Right cardiac atrium (tissue), 5 donors: ENCODE measurements at regions of chr9 and their contacts with region 1.

Region 1: DNA sequence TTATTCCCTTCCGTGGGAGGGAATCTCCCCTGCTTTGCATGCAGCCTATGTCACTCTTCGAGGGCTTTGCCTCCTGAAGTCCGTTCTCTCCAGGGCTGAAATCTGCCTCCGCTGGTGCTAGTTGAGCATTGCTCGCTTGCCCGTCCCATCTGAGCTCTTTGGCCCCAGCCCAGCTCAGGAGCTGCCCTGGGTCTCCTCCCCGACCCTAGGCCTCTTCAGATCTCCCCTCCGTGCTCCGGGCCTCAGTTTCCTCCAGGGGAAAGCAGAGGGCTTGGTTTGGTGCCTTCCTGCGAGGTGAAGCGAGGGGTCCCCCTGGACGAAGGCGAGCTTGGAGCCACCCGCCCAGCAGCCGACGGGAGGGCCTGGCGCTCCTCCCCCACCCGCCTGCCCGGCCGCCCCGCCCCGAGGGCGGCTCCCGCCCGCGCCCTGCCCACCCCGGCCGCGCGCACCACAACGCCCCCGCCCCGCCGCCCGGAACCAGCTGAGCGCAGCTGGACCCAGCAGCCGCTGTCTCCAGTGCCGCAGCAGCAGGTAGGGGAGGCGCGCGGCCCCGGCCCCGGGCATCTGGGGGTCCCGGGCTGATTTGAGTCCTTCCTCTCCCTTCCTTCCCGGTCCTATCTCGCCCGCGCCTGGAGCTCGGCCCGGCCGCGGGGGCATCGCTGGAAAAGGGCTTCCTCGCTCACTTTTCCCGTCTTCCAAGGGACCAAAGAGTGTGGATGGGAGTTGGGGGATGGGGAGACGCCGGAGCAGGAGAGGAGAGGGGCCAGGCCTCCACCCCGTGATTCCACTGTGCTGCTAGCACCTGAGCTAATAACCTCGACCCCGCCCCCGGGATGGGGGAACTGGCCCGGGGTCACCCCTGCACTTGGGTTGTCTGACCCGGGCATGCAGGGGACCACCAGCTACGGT is at the start of gene GSN:
- DNase-seq: peak; percentile 84 to 95 (median 94)
- ATAC-seq: peak; percentile 92
- H3K4me3 ChIP-seq: peak within 1 kb of the TSS; percentile 86
- H3K27ac ChIP-seq: peak within 1 kb of the TSS; percentile 73
- H3K4me1 ChIP-seq: peaks cover 20% of the 10 kb centered on the region
- H3K27me3 ChIP-seq: no peaks in the 10 kb centered on the region
- total RNA-seq, gene GSN: 949 to 1,838 (median 1,489) TPM

Region 2: DNA sequence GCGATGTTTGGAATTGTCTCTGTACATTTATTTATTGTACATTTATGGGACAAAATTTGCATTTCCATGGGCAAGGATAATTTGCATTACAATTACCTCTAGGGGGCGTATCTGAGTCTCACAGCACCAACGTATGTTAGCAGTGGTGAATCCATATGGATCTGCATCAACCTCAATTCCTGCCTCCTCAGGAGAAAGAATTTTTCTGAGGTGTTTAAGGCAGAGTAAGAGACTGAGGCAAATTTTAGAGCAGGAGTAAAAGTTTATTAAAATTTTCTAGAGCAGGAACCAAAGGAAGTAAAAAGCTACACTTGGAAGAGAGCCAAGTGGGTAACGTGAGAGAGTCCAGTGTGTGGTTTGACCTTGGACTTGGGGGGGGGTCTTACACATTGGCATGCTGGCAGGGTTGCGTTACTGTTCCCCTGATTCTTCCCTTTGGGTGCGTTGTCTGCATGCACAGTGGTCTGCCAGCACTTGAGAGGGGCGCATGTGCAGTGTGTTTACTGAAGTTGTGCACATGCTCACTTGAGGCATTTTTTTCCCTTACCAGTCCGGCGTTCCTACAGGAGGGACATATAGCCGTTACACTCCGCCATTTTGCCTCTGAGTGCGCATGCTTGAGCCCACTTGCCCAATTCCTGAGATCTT is 45.3 kb before region 1 on chr9:
- intact Hi-C with region 1: loop called in 3 of 4 experiments (anchors 5 to 10 kb)
- DNase-seq: no peak
- ATAC-seq: peak in 1 of 2 donors; percentile 46
- H3K4me3 ChIP-seq: no peak overlapping the region
- H3K27ac ChIP-seq: no peak overlapping the region
- H3K4me1 ChIP-seq: no peaks in the 10 kb centered on the region
- H3K27me3 ChIP-seq: no peaks in the 10 kb centered on the region

Region 3: DNA sequence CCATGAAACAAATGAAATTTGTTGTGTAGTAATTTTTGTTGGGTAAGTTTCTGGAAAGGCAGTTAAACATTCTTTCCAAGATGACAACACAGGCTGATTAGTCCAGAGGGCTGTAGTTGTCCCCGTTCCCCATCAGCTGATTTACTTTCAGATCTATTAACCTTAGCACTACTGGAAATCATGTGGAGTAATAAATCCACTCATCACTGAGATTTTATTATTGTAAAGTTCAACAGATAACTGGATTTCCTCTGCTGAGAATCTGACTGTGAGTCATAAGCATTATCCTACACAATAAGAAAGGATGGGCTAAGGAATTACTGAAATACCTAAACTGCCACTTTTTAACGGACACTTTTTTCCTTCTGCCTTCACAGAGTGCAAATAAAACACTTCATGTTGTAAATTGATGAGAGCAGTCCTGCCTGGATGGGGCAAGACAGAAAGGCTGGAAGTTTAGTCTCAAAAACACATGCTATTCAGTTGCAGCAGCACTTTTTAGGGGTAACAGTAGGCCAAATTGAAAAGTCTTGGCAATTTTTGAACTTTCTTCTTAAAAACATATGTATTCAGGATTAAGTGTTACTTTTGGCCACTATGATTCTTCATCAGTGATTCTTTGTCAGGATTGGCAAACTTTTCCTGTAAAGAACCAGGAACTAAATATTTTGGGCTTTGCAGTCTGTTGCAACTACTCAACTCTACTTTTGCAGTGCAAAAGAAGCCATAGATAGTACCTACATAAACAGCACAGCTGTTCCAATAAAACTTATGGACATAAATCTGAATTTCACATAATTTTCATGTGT is 95.1 kb after region 1 on chr9:
- intact Hi-C with region 1: no loop called
- DNase-seq: no peak
- ATAC-seq: peak; percentile 73 to 74
- H3K4me3 ChIP-seq: peak overlapping the region; percentile 29
- H3K27ac ChIP-seq: peak overlapping the region; percentile 97
- H3K4me1 ChIP-seq: peaks cover 9% of the 10 kb centered on the region
- H3K27me3 ChIP-seq: no peaks in the 10 kb centered on the region